ENCODE measurements at regions of chr22 and their contacts with region 1.

Region 1: GRCh38 chr22:30289134-30289979 is at the start of gene CASTOR1:
- DNase-seq: peak; percentile 99
- total RNA-seq, gene CASTOR1: 5.0 TPM

Region 2: GRCh38 chr22:30104501-30105156 is 184.7 kb before region 1 on chr22:
- intact Hi-C with region 1: no loop called
- DNase-seq: no peak

Region 3: GRCh38 chr22:30305519-30305905 is 16.2 kb after region 1 on chr22:
- intact Hi-C with region 1: loop called (anchors 2 kb)
- DNase-seq: peak; percentile 84

Region 4: DNA sequence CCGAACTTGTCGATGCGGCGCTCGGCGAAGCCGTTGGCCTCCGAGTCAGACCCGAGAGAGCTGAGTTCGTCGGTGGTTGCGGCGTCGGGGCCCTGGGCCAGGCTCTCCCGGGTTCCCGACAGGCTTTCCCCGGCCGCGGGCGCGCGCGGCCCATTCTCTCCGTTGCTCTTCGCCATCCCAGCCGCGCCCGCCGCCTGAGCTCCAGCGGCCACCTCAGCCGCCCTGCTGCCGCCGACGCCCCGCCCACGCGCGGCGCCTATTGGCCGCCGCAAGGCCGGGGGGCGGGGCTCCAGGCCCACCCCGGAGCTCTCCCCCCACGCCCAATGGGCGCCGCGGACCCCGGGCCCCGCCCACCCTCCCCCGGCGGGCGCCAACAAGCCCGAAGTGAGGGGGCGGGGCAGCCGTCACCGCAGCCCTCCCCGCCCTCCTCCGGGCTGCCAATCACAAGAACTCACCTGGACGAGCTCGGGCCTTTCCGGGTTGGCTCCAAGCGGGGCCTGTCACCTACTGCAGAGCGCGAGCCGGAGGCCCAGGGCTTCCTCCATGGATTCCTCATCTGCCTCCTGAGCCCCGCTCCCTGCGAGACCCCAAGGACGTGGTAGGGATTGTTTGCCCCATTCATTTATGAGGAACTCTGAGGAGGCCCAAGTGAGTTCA is 37.5 kb after region 1 on chr22 and contains the start of gene TBC1D10A:
- intact Hi-C with region 1: loop called (anchors 2 kb)
- DNase-seq: peak; percentile 95
- total RNA-seq, gene TBC1D10A: 5.7 TPM

Region 5: GRCh38 chr22:30356449-30357235 is 67.3 kb after region 1 on chr22 and contains the starts of genes CCDC157 and SF3A1:
- intact Hi-C with region 1: loop called (anchors 1 kb)
- DNase-seq: peak; percentile 95
- total RNA-seq, gene CCDC157: 0.78 TPM
- total RNA-seq, gene SF3A1: 106 TPM

Region 6: GRCh38 chr22:30423982-30424963 is 134.9 kb after region 1 on chr22:
- intact Hi-C with region 1: loop called (anchors 1 kb)
- DNase-seq: peak; percentile 99